Naive thymus-derived CD4-positive, alpha-beta T cell (primary cell): ENCODE measurements at regions of chr13 and their contacts with region 1.

Region 1: GRCh38 chr13:91313103-91313502 is 34.4 kb upstream of the MIR17HG start:
- DNase-seq: peak in 6 of 9 donors; percentile 23 to 53 (median 37)
- ATAC-seq: peak; percentile 78
- H3K4me3 ChIP-seq: no peak overlapping the region
- H3K4me3 Mint-ChIP-seq: peak overlapping the region in 5 of 10 donors; percentile 14 to 51 (median 37)
- H3K27ac ChIP-seq: no peak overlapping the region
- H3K27ac Mint-ChIP-seq: no peak overlapping the region
- H3K4me1 ChIP-seq: no peaks in the 10 kb centered on the region
- H3K4me1 Mint-ChIP-seq: peaks cover 2 to 23% (median 7%) of the 10 kb centered on the region in 7 donors
- H3K27me3 ChIP-seq: no peaks in the 10 kb centered on the region
- H3K27me3 Mint-ChIP-seq: peaks cover 0 to 13% (median 11%) of the 10 kb centered on the region in 5 donors

Region 2: GRCh38 chr13:91331047-91331915 is 18.2 kb after region 1 on chr13:
- CTCF ChIA-PET with region 1: interaction called, 3 read pairs
- POLR2A ChIA-PET with region 1: no interaction called
- intact Hi-C with region 1: loop called in 1 of 2 experiments (anchors 2 kb)
- DNase-seq: no peak
- ATAC-seq: no peak
- H3K4me3 ChIP-seq: no peak overlapping the region
- H3K4me3 Mint-ChIP-seq: peak overlapping the region in 1 of 10 donors; percentile 64
- H3K27ac ChIP-seq: no peak overlapping the region
- H3K27ac Mint-ChIP-seq: peak overlapping the region in 1 of 9 donors; percentile 62
- H3K4me1 ChIP-seq: no peaks in the 10 kb centered on the region
- H3K4me1 Mint-ChIP-seq: peaks cover 0 to 19% (median 0%) of the 10 kb centered on the region in 7 donors
- H3K27me3 ChIP-seq: no peaks in the 10 kb centered on the region
- H3K27me3 Mint-ChIP-seq: peaks cover 0 to 7% (median 0%) of the 10 kb centered on the region in 5 donors

Region 3: GRCh38 chr13:91348906-91349435 is 35.9 kb after region 1 on chr13:
- CTCF ChIA-PET with region 1: interaction called, 9 read pairs
- POLR2A ChIA-PET with region 1: interaction called, 4 read pairs
- intact Hi-C with region 1: loop called (anchors 1 kb)
- DNase-seq: peak; percentile 79 to 96 (median 90)
- ATAC-seq: peak; percentile 83
- H3K4me3 ChIP-seq: peak overlapping the region; percentile 70
- H3K4me3 Mint-ChIP-seq: peak overlapping the region; percentile 88 to 98 (median 91)
- H3K27ac ChIP-seq: peak overlapping the region; percentile 83
- H3K27ac Mint-ChIP-seq: peak overlapping the region; percentile 85 to 95 (median 93)
- H3K4me1 ChIP-seq: peaks cover 15 to 17% of the 10 kb centered on the region in 2 donors
- H3K4me1 Mint-ChIP-seq: peaks cover 6 to 46% (median 41%) of the 10 kb centered on the region in 7 donors
- H3K27me3 ChIP-seq: no peaks in the 10 kb centered on the region
- H3K27me3 Mint-ChIP-seq: no peaks in the 10 kb centered on the region

Region 4: DNA sequence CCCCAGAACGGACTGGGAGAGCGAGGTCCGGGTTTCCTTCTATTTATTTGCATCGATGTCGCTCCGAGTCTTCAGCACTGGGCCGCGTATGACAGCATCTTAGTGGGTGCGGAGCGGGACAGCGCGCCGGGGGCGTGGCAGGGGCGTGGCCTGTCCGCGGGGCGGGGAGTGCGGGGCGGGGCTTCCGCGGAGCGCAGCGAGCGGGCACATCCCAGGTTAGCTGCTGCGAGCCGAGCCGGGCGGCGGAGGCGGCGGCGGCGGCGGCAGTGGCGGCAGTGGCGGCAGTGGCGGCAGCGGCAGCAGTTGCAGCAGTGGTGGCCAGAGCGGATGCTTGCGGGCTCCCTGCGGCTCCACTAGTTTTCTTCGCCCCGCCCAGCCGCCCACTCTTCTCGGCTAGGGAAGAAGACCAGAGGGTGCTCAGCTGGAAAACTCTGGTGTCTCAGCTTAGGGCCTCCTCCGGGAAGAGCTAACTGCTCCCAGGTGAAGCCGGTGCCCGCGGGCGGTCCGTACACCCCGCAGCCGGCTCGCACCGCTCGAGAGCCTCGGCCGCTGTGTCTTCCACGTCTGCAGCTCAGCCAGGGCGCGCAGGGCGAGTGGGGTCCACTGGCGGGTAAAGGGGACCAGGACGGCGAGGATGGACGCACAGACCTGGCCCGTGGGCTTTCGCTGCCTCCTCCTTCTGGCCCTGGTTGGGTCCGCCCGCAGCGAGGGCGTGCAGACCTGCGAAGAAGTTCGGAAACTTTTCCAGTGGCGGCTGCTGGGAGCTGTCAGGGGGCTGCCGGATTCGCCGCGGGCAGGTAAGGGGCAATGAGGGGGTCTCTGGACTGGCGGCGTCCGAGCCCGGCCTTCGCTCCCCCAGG is 85.5 kb after region 1 on chr13 and contains the start of gene GPC5:
- CTCF ChIA-PET with region 1: no interaction called
- POLR2A ChIA-PET with region 1: no interaction called
- intact Hi-C with region 1: loop called in 1 of 2 experiments (anchors 2 kb)
- DNase-seq: peak; percentile 57 to 88 (median 77)
- ATAC-seq: peak; percentile 100
- H3K4me3 ChIP-seq: peak within 1 kb of the TSS; percentile 39
- H3K4me3 Mint-ChIP-seq: peak within 1 kb of the TSS; percentile 70 to 89 (median 81)
- H3K27ac ChIP-seq: no peak within 1 kb of the TSS
- H3K27ac Mint-ChIP-seq: peak within 1 kb of the TSS in 2 of 9 donors; percentile 18 to 25
- H3K4me1 ChIP-seq: peaks cover 5 to 11% of the 10 kb centered on the region in 2 donors
- H3K4me1 Mint-ChIP-seq: peaks cover 4 to 15% (median 12%) of the 10 kb centered on the region in 7 donors
- H3K27me3 ChIP-seq: peaks cover 0 to 4% of the 10 kb centered on the region in 2 donors
- H3K27me3 Mint-ChIP-seq: peaks cover 23 to 89% (median 45%) of the 10 kb centered on the region in 5 donors
- total RNA-seq, gene GPC5: 0.10 to 0.38 TPM in 2 of 5 experiments, not detected in the others

Region 5: DNA sequence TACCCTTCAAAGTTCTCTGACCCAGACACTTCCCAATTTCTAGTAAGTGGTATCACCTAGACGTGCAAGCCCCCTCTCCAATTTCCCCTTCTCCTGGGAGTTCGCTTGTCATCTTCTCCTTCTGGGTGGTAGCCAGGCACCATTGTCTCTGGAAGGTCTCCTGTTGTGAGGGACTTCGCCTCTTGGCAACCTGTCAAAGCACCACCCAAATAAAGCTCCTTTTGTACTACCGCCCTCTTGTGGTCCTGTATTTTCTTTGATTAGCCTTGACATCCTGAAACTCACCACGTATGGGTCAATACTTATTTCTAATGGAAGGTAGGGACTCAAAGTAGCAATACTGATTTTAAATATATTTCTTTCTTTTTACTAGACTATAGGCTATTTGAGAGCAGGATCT is 93.5 kb after region 1 on chr13:
- CTCF ChIA-PET with region 1: no interaction called
- POLR2A ChIA-PET with region 1: no interaction called
- intact Hi-C with region 1: loop called (anchors 1 kb)
- DNase-seq: peak in 1 of 9 donors; percentile 12
- ATAC-seq: no peak
- H3K4me3 ChIP-seq: no peak overlapping the region
- H3K4me3 Mint-ChIP-seq: no peak overlapping the region
- H3K27ac ChIP-seq: no peak overlapping the region
- H3K27ac Mint-ChIP-seq: peak overlapping the region in 1 of 9 donors; percentile 23
- H3K4me1 ChIP-seq: no peaks in the 10 kb centered on the region
- H3K4me1 Mint-ChIP-seq: peaks cover 0 to 2% (median 0%) of the 10 kb centered on the region in 7 donors
- H3K27me3 ChIP-seq: no peaks in the 10 kb centered on the region
- H3K27me3 Mint-ChIP-seq: peaks cover 8 to 59% (median 12%) of the 10 kb centered on the region in 5 donors

Region 6: GRCh38 chr13:91459485-91459884 is 146.4 kb after region 1 on chr13:
- CTCF ChIA-PET with region 1: interaction called, 3 read pairs
- POLR2A ChIA-PET with region 1: no interaction called
- intact Hi-C with region 1: loop called in 1 of 2 experiments (anchors 1 kb)
- DNase-seq: peak in 2 of 9 donors; percentile 2 to 5
- ATAC-seq: no peak
- H3K4me3 ChIP-seq: no peak overlapping the region
- H3K4me3 Mint-ChIP-seq: no peak overlapping the region
- H3K27ac ChIP-seq: no peak overlapping the region
- H3K27ac Mint-ChIP-seq: no peak overlapping the region
- H3K4me1 ChIP-seq: no peaks in the 10 kb centered on the region
- H3K4me1 Mint-ChIP-seq: no peaks in the 10 kb centered on the region
- H3K27me3 ChIP-seq: no peaks in the 10 kb centered on the region
- H3K27me3 Mint-ChIP-seq: peaks cover 0 to 23% (median 16%) of the 10 kb centered on the region in 5 donors

Region 7: DNA sequence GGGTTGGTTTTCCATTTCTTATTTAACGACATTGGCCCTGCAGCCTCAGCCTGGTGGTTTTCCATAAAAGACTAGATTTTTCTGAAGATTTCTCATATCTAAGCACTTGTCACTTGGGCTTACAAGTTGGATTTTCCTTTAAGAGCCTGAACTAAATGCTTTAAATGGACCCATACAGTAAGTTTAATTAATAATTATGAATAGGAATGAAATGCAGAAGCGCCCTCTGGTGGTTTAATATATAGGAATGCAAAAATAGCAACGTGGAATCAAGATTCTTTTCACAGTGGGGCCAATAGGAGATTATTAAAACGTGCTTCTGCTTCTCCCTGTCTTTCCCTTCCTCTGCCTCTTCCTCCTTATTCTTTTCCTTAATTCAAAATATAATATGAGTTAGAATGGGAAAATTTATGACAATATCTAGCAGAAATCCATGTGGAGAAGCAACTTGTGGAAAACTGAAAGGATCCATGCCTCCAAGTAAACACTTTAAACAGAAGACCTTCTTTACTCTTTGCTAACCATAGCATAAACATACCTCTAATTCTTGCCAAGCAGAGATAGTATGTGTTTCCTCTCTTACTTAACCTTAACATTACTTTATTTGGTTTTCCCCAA is 409.3 kb after region 1 on chr13:
- CTCF ChIA-PET with region 1: interaction called, 3 read pairs
- POLR2A ChIA-PET with region 1: no interaction called
- intact Hi-C with region 1: loop called (anchors 1 to 5 kb)
- DNase-seq: peak in 5 of 9 donors; percentile 1 to 26 (median 10)
- ATAC-seq: no peak
- H3K4me3 ChIP-seq: no peak overlapping the region
- H3K4me3 Mint-ChIP-seq: no peak overlapping the region
- H3K27ac ChIP-seq: no peak overlapping the region
- H3K27ac Mint-ChIP-seq: no peak overlapping the region
- H3K4me1 ChIP-seq: no peaks in the 10 kb centered on the region
- H3K4me1 Mint-ChIP-seq: peaks cover 0 to 2% (median 0%) of the 10 kb centered on the region in 7 donors
- H3K27me3 ChIP-seq: no peaks in the 10 kb centered on the region
- H3K27me3 Mint-ChIP-seq: peaks cover 0 to 11% (median 2%) of the 10 kb centered on the region in 5 donors